SK-N-SH (cell line): ENCODE measurements at regions of chr1 and their contacts with region 1.

Region 1: GRCh38 chr1:162357681-162358266 is 18.9 kb downstream of the SPATA46 start:
- DNase-seq: peak; percentile 60
- H3K4me3 ChIP-seq: peak overlapping the region in 1 of 2 experiments; percentile 34; a peak in 1 of 4 replicates
- H3K27ac ChIP-seq: no peak overlapping the region
- H3K4me1 ChIP-seq: no peaks in the 10 kb centered on the region
- H3K27me3 ChIP-seq: no peaks in the 10 kb centered on the region
- CTCF ChIP-seq: peak; percentile 59
- EP300 ChIP-seq: no peak
- RAD21 ChIP-seq: peak; percentile 71

Region 2: DNA sequence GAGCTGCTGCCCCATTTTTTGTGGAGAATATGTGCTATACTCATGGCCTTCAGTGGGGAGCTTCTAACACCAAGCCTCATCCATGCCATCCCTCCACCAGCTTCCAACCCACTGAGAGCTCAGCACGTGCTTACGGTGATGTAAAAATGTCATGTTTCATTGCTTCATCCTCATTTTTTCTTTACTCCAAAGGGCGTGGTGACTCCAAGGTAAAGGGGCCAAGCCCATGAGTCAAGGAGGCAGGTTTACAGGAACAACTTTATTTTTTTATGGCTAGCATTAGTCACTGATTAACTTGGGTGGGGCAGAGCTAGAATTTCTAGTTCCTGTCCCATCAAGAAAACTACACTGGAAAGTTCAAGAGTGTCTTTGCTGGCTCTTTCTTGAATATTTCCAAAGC is 23.6 kb after region 1 on chr1 and contains the start of gene C1orf226:
- CTCF ChIA-PET with region 1: interaction called, 12 read pairs
- POLR2A ChIA-PET with region 1: no interaction called
- DNase-seq: no peak
- H3K4me3 ChIP-seq: no peak within 1 kb of the TSS
- H3K27ac ChIP-seq: no peak within 1 kb of the TSS
- H3K4me1 ChIP-seq: no peaks in the 10 kb centered on the region
- H3K27me3 ChIP-seq: peaks cover 5% of the 10 kb centered on the region; the same call in 1 of the 2 replicates
- CTCF ChIP-seq: no peak
- EP300 ChIP-seq: no peak
- RAD21 ChIP-seq: no peak
- polyA plus RNA-seq, gene C1orf226: 0.03 and 0.05 TPM in 2 replicates

Region 3: GRCh38 chr1:162386292-162387225 is 28.8 kb after region 1 on chr1:
- CTCF ChIA-PET with region 1: interaction called, 63 read pairs
- POLR2A ChIA-PET with region 1: no interaction called
- DNase-seq: no peak
- H3K4me3 ChIP-seq: no peak overlapping the region
- H3K27ac ChIP-seq: no peak overlapping the region
- H3K4me1 ChIP-seq: peaks cover 0 to 19% of the 10 kb centered on the region in 2 experiments; a peak in 1 of 4 replicates
- H3K27me3 ChIP-seq: peaks cover 4% of the 10 kb centered on the region; the same call in 1 of the 2 replicates
- CTCF ChIP-seq: no peak
- EP300 ChIP-seq: no peak
- RAD21 ChIP-seq: no peak

Region 4: DNA sequence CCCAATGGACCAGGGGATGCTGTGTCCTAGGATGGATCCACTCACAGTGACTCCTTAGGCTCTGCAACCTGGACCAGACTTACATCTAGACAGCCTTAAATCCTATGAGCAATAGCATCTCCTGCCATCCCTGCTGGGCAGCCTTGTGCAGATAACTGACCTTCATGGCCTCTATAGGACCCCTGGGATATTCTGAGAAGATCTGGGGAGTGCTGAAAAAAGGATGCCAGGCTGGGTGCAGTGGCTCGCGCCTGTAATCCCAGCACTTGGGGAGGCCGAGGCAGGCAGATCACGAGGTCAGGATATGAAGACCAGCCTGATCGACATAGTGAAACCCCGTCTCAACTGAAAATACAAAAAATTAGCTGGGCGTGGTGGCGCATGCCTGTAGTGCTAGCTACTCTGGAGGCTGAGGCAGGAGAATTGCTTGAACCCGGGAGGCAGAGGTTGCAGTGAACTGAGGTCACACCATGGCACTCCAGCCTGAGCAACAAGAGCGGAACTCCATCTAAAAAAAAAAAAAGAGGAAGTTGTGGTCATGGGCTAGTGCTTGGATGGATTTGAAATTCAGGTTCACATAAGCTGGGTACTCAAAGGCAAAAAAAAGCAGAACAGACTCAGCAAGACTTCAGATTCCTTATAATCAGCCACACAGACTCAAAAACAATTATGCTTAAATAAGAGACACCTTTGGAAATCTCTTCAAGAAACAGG is 65.0 kb after region 1 on chr1:
- CTCF ChIA-PET with region 1: no interaction called
- POLR2A ChIA-PET with region 1: no interaction called
- DNase-seq: no peak
- H3K4me3 ChIP-seq: no peak overlapping the region
- H3K27ac ChIP-seq: no peak overlapping the region
- H3K4me1 ChIP-seq: no peaks in the 10 kb centered on the region; a peak in 1 of 4 replicates
- H3K27me3 ChIP-seq: no peaks in the 10 kb centered on the region
- CTCF ChIP-seq: no peak
- EP300 ChIP-seq: no peak
- RAD21 ChIP-seq: no peak